PC-3 (cell line): ENCODE measurements at regions of chr12 and their contacts with region 1.

Region 1: GRCh38 chr12:27652174-27652763 is 44.0 kb upstream of the REP15 start:
- DNase-seq: peak; percentile 97
- ATAC-seq: peak; percentile 96
- H3K4me3 ChIP-seq: no peak overlapping the region
- H3K27ac ChIP-seq: peak overlapping the region; percentile 21
- H3K4me1 ChIP-seq: peaks cover 7% of the 10 kb centered on the region
- H3K27me3 ChIP-seq: no peaks in the 10 kb centered on the region
- CTCF ChIP-seq: peak; percentile 99

Region 2: GRCh38 chr12:27383429-27384260 is 268.6 kb before region 1 on chr12:
- CTCF ChIA-PET with region 1: no interaction called
- POLR2A ChIA-PET with region 1: no interaction called
- intact Hi-C with region 1: loop called (anchors 1 kb)
- DNase-seq: peak; percentile 98
- ATAC-seq: peak; percentile 86
- H3K4me3 ChIP-seq: no peak overlapping the region
- H3K27ac ChIP-seq: peak overlapping the region; percentile 72
- H3K4me1 ChIP-seq: peaks cover 24% of the 10 kb centered on the region
- H3K27me3 ChIP-seq: no peaks in the 10 kb centered on the region
- CTCF ChIP-seq: peak; percentile 98

Region 3: GRCh38 chr12:27424631-27425230 is 227.5 kb before region 1 on chr12:
- CTCF ChIA-PET with region 1: no interaction called
- POLR2A ChIA-PET with region 1: no interaction called
- intact Hi-C with region 1: loop called (anchors 1 kb)
- DNase-seq: peak; percentile 66
- ATAC-seq: peak; percentile 93
- H3K4me3 ChIP-seq: no peak overlapping the region
- H3K27ac ChIP-seq: no peak overlapping the region
- H3K4me1 ChIP-seq: no peaks in the 10 kb centered on the region
- H3K27me3 ChIP-seq: no peaks in the 10 kb centered on the region
- CTCF ChIP-seq: peak; percentile 88

Region 4: DNA sequence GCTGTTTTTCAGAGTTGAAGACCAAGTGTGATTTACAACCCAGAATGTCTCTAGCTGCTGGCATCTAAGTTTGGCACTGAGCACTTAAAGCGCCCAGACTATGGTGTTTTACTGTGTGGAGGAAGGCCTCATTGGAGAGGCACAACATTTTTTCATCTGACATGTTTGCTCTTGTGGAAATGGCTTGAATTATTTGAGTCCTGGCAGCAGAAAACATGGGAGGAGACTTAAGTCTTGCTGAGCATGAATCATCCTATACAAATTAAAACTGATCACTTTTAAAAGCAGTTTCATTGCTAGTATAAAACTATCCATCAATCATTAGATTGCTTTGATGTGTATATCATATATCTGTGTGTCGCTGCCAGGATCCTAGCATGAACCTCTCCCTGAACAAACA is 41.9 kb before region 1 on chr12:
- CTCF ChIA-PET with region 1: no interaction called
- POLR2A ChIA-PET with region 1: no interaction called
- intact Hi-C with region 1: loop called (anchors 1 kb)
- DNase-seq: peak; percentile 88
- ATAC-seq: peak; percentile 81
- H3K4me3 ChIP-seq: no peak overlapping the region
- H3K27ac ChIP-seq: peak overlapping the region; percentile 49
- H3K4me1 ChIP-seq: peaks cover 36% of the 10 kb centered on the region
- H3K27me3 ChIP-seq: no peaks in the 10 kb centered on the region
- CTCF ChIP-seq: no peak

Region 5: DNA sequence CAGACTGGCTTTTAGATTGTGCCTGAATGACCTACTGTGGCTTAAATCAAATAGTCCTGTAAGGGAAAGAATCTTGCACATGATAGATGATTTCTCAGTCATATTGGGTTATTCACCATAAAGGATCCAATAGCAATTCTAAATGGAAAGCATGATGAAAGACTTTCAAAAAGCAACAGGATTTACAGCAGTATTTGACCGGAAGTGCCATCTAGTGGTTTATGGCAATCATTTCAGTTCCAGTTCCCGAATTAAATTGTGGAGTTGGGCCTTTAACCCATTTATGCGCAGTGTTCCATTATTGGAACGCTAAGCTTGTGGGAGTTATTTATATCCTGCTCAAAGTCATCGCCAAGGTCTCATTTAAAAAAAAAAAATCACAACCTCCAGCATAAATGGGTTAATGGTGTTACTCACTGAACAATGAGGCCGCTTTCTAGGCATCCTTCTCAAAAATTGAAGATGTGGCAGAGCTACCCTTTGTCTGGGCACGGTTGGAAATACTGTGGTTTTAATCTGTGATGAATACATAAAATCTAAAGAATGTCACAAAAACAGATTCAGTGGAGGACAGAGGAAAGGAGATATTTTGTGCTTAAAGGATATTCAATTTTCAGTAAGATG is 16.8 kb before region 1 on chr12:
- CTCF ChIA-PET with region 1: no interaction called
- POLR2A ChIA-PET with region 1: no interaction called
- intact Hi-C with region 1: no loop called
- DNase-seq: peak; percentile 80
- ATAC-seq: peak; percentile 60
- H3K4me3 ChIP-seq: no peak overlapping the region
- H3K27ac ChIP-seq: 0 out of 2 replicates have a peak overlapping the region, but pooled peaks have one; percentile 5
- H3K4me1 ChIP-seq: 0 out of 2 replicates have a peak, but pooled peaks cover 2% of the 10 kb centered on the region
- H3K27me3 ChIP-seq: no peaks in the 10 kb centered on the region
- CTCF ChIP-seq: peak; percentile 84

Region 6: DNA sequence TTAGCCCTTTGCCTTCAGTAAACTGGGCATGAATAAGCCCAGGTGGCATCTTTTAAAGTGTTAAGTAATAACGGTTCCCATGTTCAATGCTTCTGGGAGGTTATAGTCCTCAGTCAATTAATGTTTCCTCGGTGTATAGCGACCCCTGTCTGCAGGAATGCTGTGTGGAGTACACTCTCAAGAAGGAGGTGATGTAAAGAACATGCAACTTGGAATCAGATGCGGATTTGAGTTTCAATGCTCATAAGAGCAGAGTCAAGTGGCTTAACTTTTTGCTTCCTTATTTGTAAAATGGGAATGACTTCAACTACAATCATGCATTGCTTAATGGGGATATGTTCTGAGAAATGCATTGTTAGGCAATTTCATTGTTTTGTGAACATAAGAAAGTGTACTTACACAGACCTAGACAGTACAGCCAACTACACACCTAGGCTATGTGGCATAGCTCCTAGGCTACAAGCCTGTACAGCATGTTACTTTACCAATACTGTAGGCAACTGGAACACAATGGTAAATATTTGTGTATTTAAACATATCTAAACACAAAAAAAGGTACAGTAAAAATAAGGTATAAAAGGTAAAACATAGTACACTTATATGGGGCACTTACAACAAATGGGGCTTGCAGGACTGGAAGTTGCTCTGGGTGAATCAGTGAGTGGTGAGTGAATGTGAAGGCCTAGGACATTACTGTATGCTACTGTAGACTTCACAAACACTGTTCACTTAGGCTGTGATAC is 51.6 kb after region 1 on chr12:
- CTCF ChIA-PET with region 1: no interaction called
- POLR2A ChIA-PET with region 1: no interaction called
- intact Hi-C with region 1: loop called (anchors 1 kb)
- DNase-seq: peak; percentile 98
- ATAC-seq: peak; percentile 99
- H3K4me3 ChIP-seq: no peak overlapping the region
- H3K27ac ChIP-seq: no peak overlapping the region
- H3K4me1 ChIP-seq: no peaks in the 10 kb centered on the region
- H3K27me3 ChIP-seq: no peaks in the 10 kb centered on the region
- CTCF ChIP-seq: peak; percentile 99; the same call in 1 of the 2 replicates